Heart right ventricle (tissue), 16 donors: ENCODE measurements at regions of chrX and their contacts with region 1.

Region 1: DNA sequence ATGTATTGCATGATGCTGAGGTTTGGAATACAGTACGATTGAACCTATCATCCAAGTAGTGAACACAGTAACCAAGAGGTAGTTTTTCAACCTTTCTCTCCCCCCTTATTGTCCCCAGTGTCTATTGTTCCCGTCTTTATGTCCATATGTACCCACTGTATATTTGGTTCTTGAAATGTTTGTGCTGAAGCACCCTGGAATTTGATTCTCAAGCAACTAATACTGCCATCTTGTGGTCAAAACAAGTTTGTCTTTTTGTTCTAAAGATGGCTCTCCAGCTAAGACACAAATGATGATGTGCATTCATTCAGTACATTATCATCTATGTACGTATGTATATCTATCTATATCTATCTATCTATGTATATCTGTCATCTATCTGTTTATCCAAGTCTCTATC is 33.5 kb upstream of the DCX start:
- DNase-seq: no peak
- ATAC-seq: no peak
- H3K4me3 ChIP-seq: no peak overlapping the region
- H3K27ac ChIP-seq: no peak overlapping the region
- H3K4me1 ChIP-seq: no peaks in the 10 kb centered on the region
- H3K27me3 ChIP-seq: peaks cover 0 to 74% (median 0%) of the 10 kb centered on the region in 7 donors
- CTCF ChIP-seq: peak in 8 of 9 donors; percentile 30 to 69 (median 54)

Region 2: DNA sequence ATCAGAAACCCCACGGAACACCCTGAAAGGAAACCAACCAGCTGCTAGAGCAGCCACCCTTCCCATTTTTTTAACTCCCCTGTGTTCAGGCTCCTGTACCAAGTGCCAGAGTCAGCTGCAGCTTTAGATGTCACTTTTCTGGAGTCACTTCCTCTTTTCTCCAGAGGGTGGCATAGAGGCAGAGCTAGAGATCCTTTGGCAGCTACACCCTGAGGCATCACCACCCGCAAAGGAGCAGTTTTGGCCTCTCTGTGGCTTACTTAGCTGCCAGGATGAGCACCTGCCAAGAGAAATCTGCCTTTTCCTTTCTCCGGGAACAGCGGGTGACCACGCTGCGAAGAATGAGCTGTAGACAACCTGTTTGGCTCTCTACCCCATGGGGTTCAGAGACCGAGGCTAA is 591.9 kb before region 1 on chrX:
- intact Hi-C with region 1: loop called in 2 of 10 experiments (anchors 10 kb)
- DNase-seq: peak in 1 of 2 donors; percentile 3
- ATAC-seq: peak in 1 of 8 donors; percentile 47
- H3K4me3 ChIP-seq: no peak overlapping the region
- H3K27ac ChIP-seq: no peak overlapping the region
- H3K4me1 ChIP-seq: no peaks in the 10 kb centered on the region
- H3K27me3 ChIP-seq: peaks cover 0 to 62% (median 0%) of the 10 kb centered on the region in 7 donors
- CTCF ChIP-seq: peak in 6 of 9 donors; percentile 16 to 32 (median 26)

Region 3: GRCh38 chrX:111151764-111152163 is 293.7 kb before region 1 on chrX:
- intact Hi-C with region 1: no loop called
- DNase-seq: no peak
- ATAC-seq: no peak
- H3K4me3 ChIP-seq: no peak overlapping the region
- H3K27ac ChIP-seq: no peak overlapping the region
- H3K4me1 ChIP-seq: no peaks in the 10 kb centered on the region
- H3K27me3 ChIP-seq: peaks cover 0 to 69% (median 0%) of the 10 kb centered on the region in 7 donors
- CTCF ChIP-seq: no peak

Region 4: GRCh38 chrX:111168314-111168713 is 277.2 kb before region 1 on chrX:
- intact Hi-C with region 1: loop called in 5 of 10 experiments (anchors 5 to 10 kb)
- DNase-seq: no peak
- ATAC-seq: no peak
- H3K4me3 ChIP-seq: no peak overlapping the region
- H3K27ac ChIP-seq: no peak overlapping the region
- H3K4me1 ChIP-seq: no peaks in the 10 kb centered on the region
- H3K27me3 ChIP-seq: peaks cover 0 to 56% (median 0%) of the 10 kb centered on the region in 7 donors
- CTCF ChIP-seq: peak in 4 of 9 donors; percentile 24 to 32 (median 30)

Region 5: GRCh38 chrX:111262096-111262495 is 183.4 kb before region 1 on chrX:
- intact Hi-C with region 1: loop called in 6 of 10 experiments (anchors 10 kb)
- DNase-seq: no peak
- ATAC-seq: no peak
- H3K4me3 ChIP-seq: no peak overlapping the region
- H3K27ac ChIP-seq: no peak overlapping the region
- H3K4me1 ChIP-seq: no peaks in the 10 kb centered on the region
- H3K27me3 ChIP-seq: peaks cover 0 to 60% (median 0%) of the 10 kb centered on the region in 7 donors
- CTCF ChIP-seq: no peak

Region 6: DNA sequence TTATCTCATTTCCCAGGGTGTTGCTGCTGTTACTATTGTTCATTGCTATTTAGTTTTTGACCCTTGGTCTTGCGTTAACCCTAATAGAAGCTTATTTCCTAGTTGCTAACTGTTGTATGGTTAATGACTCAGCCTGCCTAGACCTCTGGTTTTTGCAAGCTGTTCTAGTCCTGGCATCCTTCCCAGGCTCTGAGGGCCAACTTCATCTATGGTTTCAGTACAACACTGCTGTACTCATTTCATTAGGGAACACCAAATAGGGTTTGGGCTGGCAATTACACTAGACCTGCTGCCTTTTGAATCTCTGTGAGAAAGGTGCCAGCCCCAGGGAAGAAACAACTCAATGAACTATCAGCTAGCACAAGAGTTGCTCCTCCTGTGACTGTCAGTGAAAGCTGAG is 93.1 kb before region 1 on chrX:
- intact Hi-C with region 1: loop called in 1 of 10 experiments (anchors 10 kb)
- DNase-seq: peak in 1 of 2 donors; percentile 40
- ATAC-seq: peak in 6 of 8 donors; percentile 58 to 83 (median 78)
- H3K4me3 ChIP-seq: no peak overlapping the region
- H3K27ac ChIP-seq: peak overlapping the region in 1 of 10 donors; percentile 26
- H3K4me1 ChIP-seq: peaks cover 0 to 17% (median 0%) of the 10 kb centered on the region in 9 donors
- H3K27me3 ChIP-seq: peaks cover 0 to 58% (median 0%) of the 10 kb centered on the region in 7 donors
- CTCF ChIP-seq: no peak

Region 7: GRCh38 chrX:111360839-111361238 is 84.6 kb before region 1 on chrX:
- intact Hi-C with region 1: loop called in 3 of 10 experiments (anchors 10 kb)
- DNase-seq: no peak
- ATAC-seq: no peak
- H3K4me3 ChIP-seq: no peak overlapping the region
- H3K27ac ChIP-seq: no peak overlapping the region
- H3K4me1 ChIP-seq: no peaks in the 10 kb centered on the region
- H3K27me3 ChIP-seq: peaks cover 0 to 49% (median 0%) of the 10 kb centered on the region in 7 donors
- CTCF ChIP-seq: peak in 1 of 9 donors; percentile 16

Region 8: DNA sequence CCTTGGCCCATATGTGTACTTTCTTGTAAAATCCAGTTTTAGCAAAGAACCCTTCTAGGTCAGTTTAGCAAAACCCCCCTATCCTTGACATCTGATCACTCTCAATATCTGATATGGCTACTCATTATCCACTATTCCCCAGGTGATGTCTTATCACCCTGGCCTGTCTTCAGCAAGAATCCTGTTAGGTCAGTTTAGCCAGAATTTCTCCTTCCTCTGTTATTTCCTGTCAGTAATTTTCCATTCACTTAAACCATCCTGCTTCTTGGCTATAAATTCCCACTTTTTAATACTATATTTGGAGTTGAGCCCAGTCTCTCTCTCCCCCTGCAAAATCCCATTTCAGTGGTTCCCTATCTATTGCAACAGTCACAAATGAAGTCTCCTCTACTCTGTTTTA is 154.9 kb after region 1 on chrX:
- intact Hi-C with region 1: no loop called
- DNase-seq: no peak
- ATAC-seq: no peak
- H3K4me3 ChIP-seq: no peak overlapping the region
- H3K27ac ChIP-seq: no peak overlapping the region
- H3K4me1 ChIP-seq: no peaks in the 10 kb centered on the region
- H3K27me3 ChIP-seq: peaks cover 0 to 33% (median 0%) of the 10 kb centered on the region in 7 donors
- CTCF ChIP-seq: no peak

Region 9: DNA sequence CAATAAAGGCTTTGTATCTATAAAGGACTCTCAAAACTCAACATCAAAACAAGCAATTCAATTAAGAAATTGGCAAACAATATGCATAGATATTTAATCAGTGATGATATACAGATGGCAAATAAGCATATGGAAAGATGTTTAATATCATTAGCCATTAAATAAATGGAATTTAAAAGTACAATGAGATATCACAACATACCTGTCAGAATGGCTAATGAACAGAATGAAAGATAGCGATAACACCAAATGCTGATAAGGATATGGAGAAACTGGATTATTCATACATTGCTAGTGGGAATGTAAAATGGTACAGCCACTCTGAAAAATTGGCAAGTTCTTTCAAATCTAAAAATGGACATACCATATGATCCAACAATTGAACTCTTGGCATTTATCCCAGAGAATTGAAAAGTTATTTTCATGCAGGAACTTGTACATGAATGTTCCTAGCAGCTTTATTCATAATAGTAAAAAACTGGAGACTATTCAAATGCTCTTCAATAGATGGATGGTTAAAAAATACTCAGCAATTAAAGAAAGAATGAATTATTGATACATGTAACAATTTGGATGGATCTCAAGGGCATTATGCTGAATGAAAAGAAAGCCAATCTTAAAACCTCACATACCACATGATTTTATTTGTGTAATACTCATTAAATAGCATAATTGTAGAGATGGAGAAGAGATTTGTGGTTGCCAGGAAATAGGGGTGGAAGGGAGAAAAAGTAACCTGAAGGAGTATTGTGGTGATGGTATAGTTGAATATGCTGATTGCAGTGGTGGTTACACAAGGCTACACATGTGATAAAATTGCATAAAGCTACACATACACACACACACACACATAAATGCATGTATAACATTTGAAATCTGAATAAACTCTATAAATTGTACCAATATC is 189.6 kb after region 1 on chrX:
- intact Hi-C with region 1: no loop called
- DNase-seq: no peak
- ATAC-seq: no peak
- H3K4me3 ChIP-seq: no peak overlapping the region
- H3K27ac ChIP-seq: no peak overlapping the region
- H3K4me1 ChIP-seq: peaks cover 0 to 6% (median 3%) of the 10 kb centered on the region in 9 donors
- H3K27me3 ChIP-seq: peaks cover 0 to 14% (median 0%) of the 10 kb centered on the region in 7 donors
- CTCF ChIP-seq: no peak

Region 10: GRCh38 chrX:111671668-111672067 is 226.2 kb after region 1 on chrX:
- intact Hi-C with region 1: no loop called
- DNase-seq: peak in 1 of 2 donors; percentile 23
- ATAC-seq: peak in 5 of 8 donors; percentile 68 to 89 (median 81)
- H3K4me3 ChIP-seq: no peak overlapping the region
- H3K27ac ChIP-seq: peak overlapping the region in 4 of 10 donors; percentile 7 to 70 (median 46)
- H3K4me1 ChIP-seq: peaks cover 0 to 5% (median 0%) of the 10 kb centered on the region in 9 donors
- H3K27me3 ChIP-seq: peaks cover 0 to 41% (median 0%) of the 10 kb centered on the region in 7 donors
- CTCF ChIP-seq: no peak